SK-N-SH (cell line): ENCODE measurements at regions of chr12 and their contacts with region 1.

Region 1: GRCh38 chr12:27779920-27780611 is at the starts of genes KLHL42 and MANSC4:
- DNase-seq: peak; percentile 92
- H3K4me3 ChIP-seq: peak within 1 kb of the TSS; percentile 79 to 85
- H3K27ac ChIP-seq: peak within 1 kb of the TSS; percentile 79 to 97
- H3K4me1 ChIP-seq: peaks cover 12 to 22% of the 10 kb centered on the region in 2 experiments
- H3K27me3 ChIP-seq: no peaks in the 10 kb centered on the region
- CTCF ChIP-seq: peak; percentile 11; the same call in 1 of the 2 replicates
- EP300 ChIP-seq: no peak
- RAD21 ChIP-seq: no peak
- polyA plus RNA-seq, gene KLHL42: 11.7 and 18.5 TPM in 2 replicates
- polyA plus RNA-seq, gene MANSC4: not detected in 2 replicates

Region 2: DNA sequence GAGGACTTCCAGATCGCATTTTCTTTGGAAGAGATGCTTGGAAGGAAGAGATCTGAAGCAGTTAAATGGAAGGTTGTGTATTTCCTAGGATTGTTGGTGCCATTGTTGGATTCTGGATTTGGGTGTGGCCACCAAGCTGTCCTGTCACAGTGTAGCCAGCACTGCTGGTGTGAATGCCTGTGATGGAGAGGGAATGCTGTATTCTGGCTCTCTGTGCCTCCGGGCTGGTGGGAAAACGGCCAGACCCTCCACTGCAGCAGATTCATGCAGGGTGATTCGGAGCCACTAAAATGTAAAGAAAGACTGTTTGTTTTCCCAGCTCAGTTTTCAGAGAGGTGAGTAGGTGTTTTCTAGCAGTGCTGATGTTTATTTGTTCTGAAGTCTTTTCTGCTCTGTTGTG is 30.7 kb after region 1 on chr12:
- CTCF ChIA-PET with region 1: interaction called, 4 read pairs
- POLR2A ChIA-PET with region 1: interaction called, 11 read pairs
- DNase-seq: peak; percentile 17
- H3K4me3 ChIP-seq: no peak overlapping the region
- H3K27ac ChIP-seq: no peak overlapping the region
- H3K4me1 ChIP-seq: peaks cover 0 to 5% of the 10 kb centered on the region in 2 experiments; a peak in 1 of 4 replicates
- H3K27me3 ChIP-seq: no peaks in the 10 kb centered on the region
- CTCF ChIP-seq: no peak
- EP300 ChIP-seq: no peak
- RAD21 ChIP-seq: no peak